Ovary (tissue), 10 donors: ENCODE measurements at regions of chr3 and their contacts with region 1.

Region 1: GRCh38 chr3:36700537-36701248 is 63.7 kb downstream of the DCLK3 start:
- DNase-seq: peak; percentile 13 to 57 (median 33)
- H3K4me3 ChIP-seq: no peak overlapping the region
- H3K27ac ChIP-seq: no peak overlapping the region
- H3K4me1 ChIP-seq: no peaks in the 10 kb centered on the region
- H3K27me3 ChIP-seq: no peaks in the 10 kb centered on the region
- CTCF ChIP-seq: peak in 1 of 3 donors; percentile 16
- EP300 ChIP-seq: no peak
- POLR2A ChIP-seq: no peak

Region 2: GRCh38 chr3:35965908-35966307 is 734.8 kb before region 1 on chr3:
- intact Hi-C with region 1: loop called (anchors 5 to 10 kb)
- DNase-seq: no peak
- H3K4me3 ChIP-seq: no peak overlapping the region
- H3K27ac ChIP-seq: no peak overlapping the region
- H3K4me1 ChIP-seq: no peaks in the 10 kb centered on the region
- H3K27me3 ChIP-seq: peaks cover 3% of the 10 kb centered on the region
- CTCF ChIP-seq: no peak
- EP300 ChIP-seq: no peak
- POLR2A ChIP-seq: no peak